Esophagus muscularis mucosa (tissue), 4 donors: ENCODE measurements at regions of chr22 and their contacts with region 1.

Region 1: DNA sequence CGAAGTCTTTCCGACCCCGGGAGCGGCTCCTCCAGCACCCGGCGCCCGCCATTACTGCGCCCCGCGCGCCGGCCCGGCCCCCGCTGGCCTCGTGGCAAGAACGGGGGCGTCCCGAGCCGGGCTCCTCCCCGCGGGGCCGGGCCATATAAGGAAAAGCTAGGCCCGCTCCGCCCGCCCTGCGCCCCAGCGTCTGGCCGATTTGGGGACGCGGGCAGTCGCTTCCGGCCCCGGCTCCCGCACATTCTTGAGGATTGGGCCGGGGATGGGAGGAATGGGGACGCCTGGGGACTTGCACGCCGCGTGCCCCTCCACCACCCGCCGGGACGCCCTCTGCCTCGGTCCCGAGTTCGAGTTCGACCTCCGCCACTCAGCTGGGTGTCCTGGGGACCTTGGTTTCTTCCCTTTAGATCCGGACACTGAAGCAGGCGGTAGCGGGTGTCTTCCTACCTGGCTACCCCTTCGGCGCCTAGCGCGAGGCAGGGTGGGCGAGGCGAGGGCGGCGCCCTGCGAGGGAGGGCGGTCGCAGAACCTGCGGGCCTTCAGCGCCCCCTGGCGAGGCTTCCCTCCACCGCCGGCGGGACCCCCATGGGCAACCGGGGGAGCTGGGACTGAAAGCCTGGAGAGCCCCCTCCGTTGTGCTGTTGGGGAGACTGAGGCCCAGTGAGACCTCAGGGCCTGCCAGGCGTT is 3.8 kb downstream of the SMTN start:
- DNase-seq: peak; percentile 97
- H3K4me3 ChIP-seq: peak overlapping the region; percentile 68 to 91 (median 78)
- H3K27ac ChIP-seq: peak overlapping the region; percentile 98 to 99 (median 99)
- H3K4me1 ChIP-seq: peaks cover 64 to 90% (median 86%) of the 10 kb centered on the region in 4 donors
- H3K27me3 ChIP-seq: no peaks in the 10 kb centered on the region
- CTCF ChIP-seq: peak; percentile 85 to 92 (median 86)
- EP300 ChIP-seq: no peak
- POLR2A ChIP-seq: no peak

Region 2: GRCh38 chr22:30860176-30861105 is 224.5 kb before region 1 on chr22:
- intact Hi-C with region 1: no loop called
- DNase-seq: peak; percentile 83
- H3K4me3 ChIP-seq: no peak overlapping the region
- H3K27ac ChIP-seq: no peak overlapping the region
- H3K4me1 ChIP-seq: no peaks in the 10 kb centered on the region
- H3K27me3 ChIP-seq: peaks cover 0 to 13% (median 0%) of the 10 kb centered on the region in 4 donors
- CTCF ChIP-seq: no peak
- EP300 ChIP-seq: no peak
- POLR2A ChIP-seq: no peak

Region 3: DNA sequence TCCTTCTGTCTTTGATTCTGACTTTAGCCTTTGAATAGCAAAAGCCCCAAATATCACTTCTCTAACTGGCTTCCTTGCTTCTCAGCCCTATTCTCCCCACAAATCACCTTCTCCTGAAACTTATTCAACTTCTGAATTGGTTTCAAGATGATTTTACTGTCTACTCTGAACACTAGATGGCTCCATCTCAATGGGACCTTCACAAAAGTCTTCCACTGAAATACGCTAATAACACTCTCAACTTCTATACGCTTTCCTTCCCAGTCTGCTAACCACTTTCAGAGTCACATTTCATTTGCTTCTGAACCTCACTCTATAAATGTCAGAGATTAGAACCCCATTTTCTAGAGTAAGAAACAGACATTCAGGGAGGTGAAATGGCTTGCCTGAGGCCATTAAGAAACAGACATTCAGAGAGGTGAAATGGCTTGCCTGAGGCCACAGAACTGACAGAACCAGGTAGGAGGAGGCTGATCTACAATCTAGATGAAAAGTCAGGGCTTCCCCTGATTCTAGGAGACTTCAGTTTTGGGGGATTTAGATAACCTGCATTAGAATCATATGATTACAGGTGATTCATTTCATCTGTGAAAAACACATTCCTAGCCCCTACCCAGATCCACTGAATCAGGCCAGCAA is 137.0 kb before region 1 on chr22:
- intact Hi-C with region 1: loop called (anchors 2 kb)
- DNase-seq: peak; percentile 14
- H3K4me3 ChIP-seq: no peak overlapping the region
- H3K27ac ChIP-seq: peak overlapping the region; percentile 69 to 83 (median 78)
- H3K4me1 ChIP-seq: peaks cover 21 to 46% (median 33%) of the 10 kb centered on the region in 4 donors
- H3K27me3 ChIP-seq: no peaks in the 10 kb centered on the region
- CTCF ChIP-seq: peak; percentile 65 to 73 (median 66)
- EP300 ChIP-seq: no peak
- POLR2A ChIP-seq: no peak

Region 4: GRCh38 chr22:30968924-30969539 is 115.9 kb before region 1 on chr22 and contains the start of gene TUG1:
- intact Hi-C with region 1: loop called (anchors 2 kb)
- DNase-seq: peak; percentile 100
- H3K4me3 ChIP-seq: peak within 1 kb of the TSS; percentile 86 to 92 (median 92)
- H3K27ac ChIP-seq: peak within 1 kb of the TSS; percentile 95 to 98 (median 98)
- H3K4me1 ChIP-seq: peaks cover 18 to 57% (median 33%) of the 10 kb centered on the region in 4 donors
- H3K27me3 ChIP-seq: no peaks in the 10 kb centered on the region
- CTCF ChIP-seq: no peak
- EP300 ChIP-seq: no peak
- POLR2A ChIP-seq: peak; percentile 83
- total RNA-seq, gene TUG1: 53.0 to 78.5 (median 64.1) TPM

Region 5: DNA sequence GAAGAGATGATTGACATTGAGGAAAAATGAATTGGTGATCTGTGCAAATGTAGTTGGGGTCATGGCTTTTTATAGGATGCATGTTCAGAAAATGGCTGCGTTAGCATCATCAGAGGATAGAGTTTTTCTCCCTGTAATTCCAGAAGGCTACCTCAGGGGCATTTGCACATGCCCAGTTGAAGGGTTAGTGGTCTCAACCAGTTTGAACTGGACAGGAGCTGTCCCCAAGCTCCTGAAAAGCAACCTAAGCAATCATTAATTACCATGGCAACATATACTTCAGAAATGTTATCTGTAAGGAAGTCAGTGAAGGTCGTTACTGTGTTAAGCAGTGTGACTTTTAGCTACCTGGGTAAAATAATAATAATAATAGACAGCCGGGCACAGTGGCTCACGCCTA is 86.6 kb before region 1 on chr22:
- intact Hi-C with region 1: no loop called
- DNase-seq: no peak
- H3K4me3 ChIP-seq: no peak overlapping the region
- H3K27ac ChIP-seq: no peak overlapping the region
- H3K4me1 ChIP-seq: no peaks in the 10 kb centered on the region
- H3K27me3 ChIP-seq: no peaks in the 10 kb centered on the region
- CTCF ChIP-seq: no peak
- EP300 ChIP-seq: no peak
- POLR2A ChIP-seq: no peak

Region 6: DNA sequence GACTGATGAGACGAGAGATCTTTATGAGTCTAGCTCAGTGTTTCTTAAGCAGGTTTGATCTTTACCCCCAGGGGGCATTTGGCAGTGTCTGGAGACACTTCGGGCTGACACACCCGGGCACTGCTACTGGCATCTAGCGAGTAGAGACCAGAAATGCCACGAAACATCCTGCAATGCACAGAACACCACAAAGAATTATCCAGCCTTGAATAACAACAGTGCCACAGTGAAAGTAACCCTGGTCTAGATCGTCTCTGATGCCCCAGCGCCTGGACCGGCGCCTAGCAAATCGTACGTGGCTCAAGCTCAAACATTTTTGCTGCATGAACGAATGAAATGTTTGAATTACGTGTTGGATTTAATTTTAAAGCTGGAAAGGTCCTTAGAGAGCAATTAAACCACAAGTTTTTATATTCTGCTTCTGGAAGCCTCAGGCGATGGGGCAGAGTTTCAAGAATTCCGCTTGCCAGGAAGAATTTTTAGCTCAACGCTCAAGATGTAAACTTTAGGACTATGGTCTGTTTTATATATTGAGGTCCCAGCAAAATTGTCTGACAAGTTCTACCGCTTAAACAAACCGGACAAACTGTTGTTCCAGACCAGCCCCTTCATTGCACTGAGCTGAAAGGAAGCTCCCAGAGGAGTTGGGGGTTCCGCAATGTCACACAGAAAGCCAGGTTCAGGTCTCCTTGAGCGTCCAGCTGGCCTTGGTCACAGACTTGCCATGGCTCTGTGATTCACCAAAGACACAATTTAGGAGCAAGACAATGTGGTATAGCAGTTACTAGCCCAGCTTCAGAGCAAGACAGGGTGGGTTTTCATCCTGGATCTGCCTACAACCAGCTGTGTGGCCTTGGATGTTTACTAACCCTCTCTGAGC is 48.0 kb before region 1 on chr22:
- intact Hi-C with region 1: loop called (anchors 1 kb)
- DNase-seq: no peak
- H3K4me3 ChIP-seq: peak overlapping the region; percentile 22 to 49 (median 37)
- H3K27ac ChIP-seq: peak overlapping the region; percentile 87 to 92 (median 90)
- H3K4me1 ChIP-seq: peaks cover 23 to 58% (median 55%) of the 10 kb centered on the region in 4 donors
- H3K27me3 ChIP-seq: no peaks in the 10 kb centered on the region
- CTCF ChIP-seq: peak in 1 of 3 experiments; percentile 6
- EP300 ChIP-seq: no peak
- POLR2A ChIP-seq: no peak

Region 7: GRCh38 chr22:31055635-31056159 is 29.3 kb before region 1 on chr22:
- intact Hi-C with region 1: loop called (anchors 1 kb)
- DNase-seq: peak; percentile 96
- H3K4me3 ChIP-seq: no peak overlapping the region
- H3K27ac ChIP-seq: peak overlapping the region; percentile 88 to 97 (median 95)
- H3K4me1 ChIP-seq: peaks cover 20 to 60% (median 46%) of the 10 kb centered on the region in 4 donors
- H3K27me3 ChIP-seq: no peaks in the 10 kb centered on the region
- CTCF ChIP-seq: no peak
- EP300 ChIP-seq: peak; percentile 91
- POLR2A ChIP-seq: no peak

Region 8: GRCh38 chr22:31107178-31107893 is 22.4 kb after region 1 on chr22 and contains the start of gene SELENOM:
- intact Hi-C with region 1: loop called (anchors 2 kb)
- DNase-seq: peak; percentile 99
- H3K4me3 ChIP-seq: peak within 1 kb of the TSS; percentile 90 to 95 (median 91)
- H3K27ac ChIP-seq: peak within 1 kb of the TSS; percentile 98 to 99 (median 99)
- H3K4me1 ChIP-seq: peaks cover 47 to 54% (median 52%) of the 10 kb centered on the region in 4 donors
- H3K27me3 ChIP-seq: no peaks in the 10 kb centered on the region
- CTCF ChIP-seq: peak; percentile 95 to 99 (median 97)
- EP300 ChIP-seq: no peak
- POLR2A ChIP-seq: peak; percentile 83
- total RNA-seq, gene SELENOM: 1,118 to 1,733 (median 1,416) TPM

Region 9: GRCh38 chr22:31244044-31244942 is 159.3 kb after region 1 on chr22:
- intact Hi-C with region 1: no loop called
- DNase-seq: no peak
- H3K4me3 ChIP-seq: no peak overlapping the region
- H3K27ac ChIP-seq: peak overlapping the region; percentile 3 to 70 (median 40)
- H3K4me1 ChIP-seq: peaks cover 25 to 41% (median 36%) of the 10 kb centered on the region in 4 donors
- H3K27me3 ChIP-seq: no peaks in the 10 kb centered on the region
- CTCF ChIP-seq: no peak
- EP300 ChIP-seq: no peak
- POLR2A ChIP-seq: no peak